CD8-positive, alpha-beta T cell (primary cell): ENCODE measurements at regions of chr12 and their contacts with region 1.

Region 1: GRCh38 chr12:93582116-93582772 is 9.8 kb downstream of the SOCS2 start:
- DNase-seq: no peak
- ATAC-seq: no peak
- H3K4me3 ChIP-seq: no peak overlapping the region
- H3K4me3 Mint-ChIP-seq: no peak overlapping the region
- H3K27ac ChIP-seq: no peak overlapping the region
- H3K27ac Mint-ChIP-seq: no peak overlapping the region
- H3K4me1 ChIP-seq: no peaks in the 10 kb centered on the region
- H3K4me1 Mint-ChIP-seq: no peaks in the 10 kb centered on the region
- H3K27me3 ChIP-seq: no peaks in the 10 kb centered on the region
- H3K27me3 Mint-ChIP-seq: no peaks in the 10 kb centered on the region
- CTCF ChIP-seq: no peak

Region 2: DNA sequence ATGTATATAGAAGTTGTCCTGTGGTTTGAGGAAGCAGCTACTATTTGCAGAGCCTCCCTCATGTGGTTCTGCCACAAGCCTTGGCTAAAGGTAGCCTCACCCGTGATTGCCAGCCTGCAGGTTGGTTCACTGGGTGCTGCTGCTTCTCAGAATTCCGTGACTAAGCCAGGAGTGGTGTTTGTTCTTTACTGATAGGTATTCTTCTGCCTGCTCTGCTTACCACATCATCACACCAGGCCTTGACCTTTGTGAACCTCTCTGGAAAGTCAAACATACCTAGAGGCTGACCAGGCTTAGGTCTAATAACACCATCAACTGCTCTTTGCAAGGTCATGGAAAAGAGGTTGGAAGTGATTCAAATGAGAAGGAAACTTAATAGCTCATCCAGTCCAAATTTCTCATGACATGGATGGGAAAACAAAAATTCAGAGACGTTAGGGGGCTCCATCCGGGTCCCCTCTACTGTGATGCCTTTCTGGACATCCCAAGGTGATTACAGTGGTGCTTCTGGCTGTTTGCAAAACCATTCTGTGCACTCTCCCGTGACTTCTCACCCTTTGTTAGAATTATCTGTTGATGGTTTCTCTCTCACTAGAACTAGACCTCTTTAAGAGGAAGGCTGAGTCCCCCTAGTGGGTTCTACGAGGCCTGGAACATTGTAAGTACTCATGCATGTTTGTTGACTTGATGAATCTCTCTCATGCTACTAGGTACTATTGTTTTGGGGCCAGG is 18.3 kb before region 1 on chr12:
- CTCF ChIA-PET with region 1: no interaction called
- POLR2A ChIA-PET with region 1: no interaction called
- intact Hi-C with region 1: loop called in 1 of 2 experiments (anchors 1 kb)
- DNase-seq: no peak
- ATAC-seq: no peak
- H3K4me3 ChIP-seq: no peak overlapping the region
- H3K4me3 Mint-ChIP-seq: no peak overlapping the region
- H3K27ac ChIP-seq: no peak overlapping the region
- H3K27ac Mint-ChIP-seq: no peak overlapping the region
- H3K4me1 ChIP-seq: no peaks in the 10 kb centered on the region
- H3K4me1 Mint-ChIP-seq: peaks cover 4% of the 10 kb centered on the region
- H3K27me3 ChIP-seq: no peaks in the 10 kb centered on the region
- H3K27me3 Mint-ChIP-seq: no peaks in the 10 kb centered on the region
- CTCF ChIP-seq: no peak

Region 3: DNA sequence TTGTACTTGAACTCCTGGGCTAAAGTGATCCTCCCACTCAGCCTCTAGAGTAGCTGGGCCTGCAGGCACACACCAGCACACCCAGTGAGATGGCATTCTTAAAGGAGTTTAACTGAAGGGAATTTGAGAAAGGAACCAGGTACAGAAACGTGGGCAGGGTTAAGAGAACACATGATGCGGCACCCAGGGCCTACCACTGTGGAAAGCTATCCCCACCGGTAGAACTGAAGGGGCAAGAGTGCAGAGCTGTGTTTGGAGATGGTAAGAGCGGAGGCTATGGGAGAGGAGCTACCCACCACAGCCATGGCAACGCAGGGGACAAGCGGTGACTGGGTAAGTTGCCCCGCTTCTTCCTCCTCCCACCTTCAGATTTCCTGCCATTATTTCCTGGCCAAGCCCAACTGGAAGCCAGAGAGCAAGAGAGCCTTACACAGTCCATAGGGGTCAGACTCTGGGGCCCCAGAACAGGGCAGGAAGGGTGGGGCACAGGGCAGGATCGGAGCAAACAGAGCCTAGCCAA is 36.7 kb after region 1 on chr12:
- CTCF ChIA-PET with region 1: no interaction called
- POLR2A ChIA-PET with region 1: no interaction called
- intact Hi-C with region 1: loop called in 1 of 2 experiments (anchors 1 kb)
- DNase-seq: no peak
- ATAC-seq: no peak
- H3K4me3 ChIP-seq: no peak overlapping the region
- H3K4me3 Mint-ChIP-seq: no peak overlapping the region
- H3K27ac ChIP-seq: no peak overlapping the region
- H3K27ac Mint-ChIP-seq: no peak overlapping the region
- H3K4me1 ChIP-seq: no peaks in the 10 kb centered on the region
- H3K4me1 Mint-ChIP-seq: no peaks in the 10 kb centered on the region
- H3K27me3 ChIP-seq: no peaks in the 10 kb centered on the region
- H3K27me3 Mint-ChIP-seq: no peaks in the 10 kb centered on the region
- CTCF ChIP-seq: no peak